ENCODE measurements at regions of chr1 and their contacts with region 1.

Region 1: GRCh38 chr1:41360993-41361753 is at the start of gene FOXO6:
- DNase-seq: peak; percentile 87
- H3K4me3 Mint-ChIP-seq: peak within 1 kb of the TSS; percentile 72
- H3K27ac Mint-ChIP-seq: no peak within 1 kb of the TSS
- H3K4me1 Mint-ChIP-seq: no peaks in the 10 kb centered on the region
- H3K27me3 Mint-ChIP-seq: peaks cover 35% of the 10 kb centered on the region
- total RNA-seq, gene FOXO6: not detected in 2 replicates

Region 2: GRCh38 chr1:41381692-41382477 is 20.7 kb after region 1 on chr1:
- intact Hi-C with region 1: loop called (anchors 1 kb)
- DNase-seq: no peak
- H3K4me3 Mint-ChIP-seq: peak overlapping the region; percentile 74
- H3K27ac Mint-ChIP-seq: no peak overlapping the region
- H3K4me1 Mint-ChIP-seq: peaks cover 12% of the 10 kb centered on the region
- H3K27me3 Mint-ChIP-seq: peaks cover 62% of the 10 kb centered on the region

Measured in activated T-helper 1 cell treated with anti-CD3 and anti-CD28 coated beads, Interleukin-12 subunit alpha, Interleukin-12 subunit beta, Interleukin-2, Interleukin-4 antibody, amounts not matched to agents 30 ng/mL and 10 ng/mL and 1 ng/mL, durations not matched to agents 14 hours and 24 hours and 36 hours (primary cell).